ENCODE measurements at regions of chr4 and their contacts with region 1.

Region 1: DNA sequence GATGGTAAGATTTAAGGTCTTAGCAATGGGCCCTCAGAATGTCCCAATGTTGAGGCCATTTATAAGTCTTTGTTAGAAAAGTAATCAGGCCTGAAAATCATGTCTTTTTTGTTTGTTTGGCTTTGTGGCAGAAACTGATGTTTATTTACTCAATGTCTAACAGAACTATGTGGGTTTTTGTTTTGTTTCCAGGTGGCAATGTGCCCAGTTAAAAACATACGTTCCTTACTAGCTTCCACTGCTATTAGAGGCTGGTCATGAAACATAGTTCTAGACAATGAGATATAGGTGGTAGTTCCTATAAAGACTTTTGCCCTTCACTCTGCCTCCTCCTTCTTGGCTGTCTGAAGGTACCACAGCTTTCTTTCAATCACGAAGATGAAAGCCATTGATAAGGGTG is 108.8 kb downstream of the C4orf51 start:
- DNase-seq: no peak
- ATAC-seq: no peak

Region 2: DNA sequence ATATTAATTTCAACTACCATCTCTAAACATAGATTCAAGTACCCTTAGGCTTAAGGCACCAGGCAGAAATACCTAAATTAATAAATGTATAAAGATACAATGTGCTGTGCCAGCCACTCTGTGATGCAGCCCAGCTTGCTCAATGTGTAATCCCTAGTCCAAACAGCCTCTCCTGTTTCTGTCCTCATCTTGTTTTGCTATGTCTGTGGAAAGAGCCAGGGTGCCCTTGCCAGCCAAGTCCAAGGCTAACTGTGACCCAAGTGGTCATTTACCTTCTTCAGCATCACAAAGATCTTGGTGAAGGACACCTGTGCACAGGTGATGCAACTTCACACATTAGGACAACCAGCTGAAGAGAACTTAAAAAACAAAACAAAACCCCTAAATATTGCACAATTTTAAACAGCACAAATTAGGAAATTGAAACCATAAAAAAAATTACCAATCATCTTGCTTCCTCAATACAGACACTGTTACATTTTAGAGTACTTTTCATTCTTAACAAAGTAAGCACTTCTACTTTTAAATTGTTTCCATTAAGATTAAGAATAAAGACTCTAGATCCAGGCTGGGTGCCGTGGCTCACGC is 19.2 kb before region 1 on chr4:
- intact Hi-C with region 1: loop called (anchors 1 kb)
- DNase-seq: no peak
- ATAC-seq: no peak

Measured in sciatic nerve (tissue), 2 donors.